ENCODE measurements at regions of chr6 and their contacts with region 1.

Region 1: DNA sequence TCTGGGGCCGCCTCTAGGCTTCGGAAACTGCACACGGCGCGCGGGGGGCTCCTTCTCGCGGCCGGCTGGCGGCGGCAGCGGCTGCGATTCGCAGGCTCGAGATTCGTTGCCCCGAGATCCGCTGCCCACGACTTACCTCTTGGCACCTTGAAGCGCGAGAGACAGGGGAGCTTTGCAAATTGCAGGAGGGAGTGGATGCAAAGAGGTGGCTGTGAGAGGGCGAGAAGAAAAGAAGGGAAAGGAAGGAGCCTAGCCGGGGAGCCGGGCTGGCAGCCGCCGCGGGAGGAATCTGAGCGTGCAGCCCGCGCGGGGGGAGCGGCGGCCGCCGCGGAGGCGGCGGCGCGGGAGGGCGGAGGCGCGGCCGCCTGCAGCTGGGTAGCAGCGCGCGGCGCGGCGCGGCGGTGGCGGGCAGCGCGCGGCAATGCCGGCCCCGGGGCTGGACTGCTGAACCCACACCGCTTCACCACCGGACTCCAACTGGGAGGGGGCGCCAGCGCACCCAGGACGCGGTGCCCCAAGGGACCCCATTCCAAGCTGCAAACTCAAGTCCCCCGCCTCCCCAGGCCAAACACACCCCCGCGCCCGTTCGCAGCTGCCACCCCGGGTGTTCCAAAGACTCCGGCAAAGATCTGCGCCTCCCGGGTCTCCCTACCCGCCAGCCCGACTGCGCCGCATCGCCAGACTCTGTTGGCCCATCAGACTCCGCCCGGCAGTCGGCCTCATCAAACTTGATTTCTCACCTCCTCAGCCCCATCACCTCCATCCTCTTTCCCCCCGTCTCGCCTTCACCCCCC is 44.2 kb upstream of the SUPT3H start:
- DNase-seq: peak; percentile 37
- H3K4me3 Mint-ChIP-seq: peak overlapping the region; percentile 97
- H3K27ac Mint-ChIP-seq: peak overlapping the region; percentile 94
- H3K4me1 Mint-ChIP-seq: peaks cover 38% of the 10 kb centered on the region
- H3K27me3 Mint-ChIP-seq: peaks cover 26% of the 10 kb centered on the region

Region 2: DNA sequence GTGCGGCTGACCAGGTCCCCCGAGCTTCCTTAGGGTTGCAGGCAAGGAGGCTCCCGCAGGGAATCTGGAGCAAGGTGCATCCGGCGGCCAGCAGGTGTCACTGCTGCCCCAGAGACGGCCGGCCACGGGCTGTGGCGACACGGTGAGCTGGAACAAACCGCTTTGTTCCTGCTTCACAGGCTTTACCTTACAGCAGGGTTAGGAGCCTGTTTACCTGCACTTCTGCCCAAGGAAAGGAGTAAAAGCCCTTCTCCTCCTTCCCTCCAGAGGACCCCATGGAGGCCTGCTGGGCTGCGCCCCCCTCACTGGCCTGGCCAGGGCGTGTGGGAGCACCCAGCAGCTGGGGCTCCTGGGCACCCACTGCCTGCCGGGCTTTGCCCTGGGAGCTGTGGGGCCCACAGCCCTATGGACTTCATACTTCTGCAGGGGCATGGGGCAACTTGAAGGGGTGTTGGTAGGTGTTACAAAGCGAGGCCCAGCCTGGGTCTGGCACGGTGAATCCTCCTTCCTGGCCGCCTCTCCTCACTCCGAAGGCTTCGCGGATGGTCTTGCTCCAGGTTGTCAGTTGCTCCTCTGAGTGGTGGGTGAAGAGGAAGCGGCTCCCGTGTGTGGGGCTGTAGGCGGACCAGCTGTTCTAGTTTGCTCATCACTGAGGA is 946.0 kb before region 1 on chr6:
- intact Hi-C with region 1: loop called (anchors 5 kb)
- DNase-seq: peak; percentile 61
- H3K4me3 Mint-ChIP-seq: no peak overlapping the region
- H3K27ac Mint-ChIP-seq: no peak overlapping the region
- H3K4me1 Mint-ChIP-seq: no peaks in the 10 kb centered on the region
- H3K27me3 Mint-ChIP-seq: peaks cover 13% of the 10 kb centered on the region

Region 3: GRCh38 chr6:44655412-44656342 is 766.2 kb before region 1 on chr6:
- intact Hi-C with region 1: loop called (anchors 1 kb)
- DNase-seq: peak; percentile 47
- H3K4me3 Mint-ChIP-seq: no peak overlapping the region
- H3K27ac Mint-ChIP-seq: peak overlapping the region; percentile 8
- H3K4me1 Mint-ChIP-seq: peaks cover 8% of the 10 kb centered on the region
- H3K27me3 Mint-ChIP-seq: peaks cover 4% of the 10 kb centered on the region

Region 4: GRCh38 chr6:45156075-45156474 is 265.8 kb before region 1 on chr6:
- intact Hi-C with region 1: loop called (anchors 2 kb)
- DNase-seq: peak; percentile 47
- H3K4me3 Mint-ChIP-seq: no peak overlapping the region
- H3K27ac Mint-ChIP-seq: peak overlapping the region; percentile 53
- H3K4me1 Mint-ChIP-seq: peaks cover 56% of the 10 kb centered on the region
- H3K27me3 Mint-ChIP-seq: no peaks in the 10 kb centered on the region

Region 5: GRCh38 chr6:45436544-45437438 is 14.9 kb after region 1 on chr6:
- intact Hi-C with region 1: loop called (anchors 1 kb)
- DNase-seq: no peak
- H3K4me3 Mint-ChIP-seq: peak overlapping the region; percentile 70
- H3K27ac Mint-ChIP-seq: peak overlapping the region; percentile 86
- H3K4me1 Mint-ChIP-seq: peaks cover 59% of the 10 kb centered on the region
- H3K27me3 Mint-ChIP-seq: no peaks in the 10 kb centered on the region

Region 6: DNA sequence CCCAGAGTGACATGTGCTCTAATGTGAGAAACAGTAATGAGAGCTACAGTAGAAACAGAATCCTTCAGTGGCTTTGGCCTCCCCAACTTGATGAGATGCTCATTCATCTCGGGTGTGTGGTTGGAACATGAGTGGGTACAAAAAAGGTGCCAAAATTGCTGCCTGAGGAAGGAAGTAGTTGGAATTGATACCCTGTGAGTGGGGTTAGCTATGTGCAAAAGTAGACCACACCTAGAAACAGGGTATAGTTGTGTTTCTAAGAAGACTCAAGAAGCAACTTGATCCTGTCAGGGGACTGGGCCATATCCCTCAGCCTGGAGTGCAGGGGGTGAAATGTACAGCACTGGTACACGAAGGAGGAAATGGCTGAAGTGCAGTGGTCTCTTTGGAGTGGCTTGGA is 162.2 kb after region 1 on chr6:
- intact Hi-C with region 1: loop called (anchors 1 kb)
- DNase-seq: no peak
- H3K4me3 Mint-ChIP-seq: peak overlapping the region; percentile 27
- H3K27ac Mint-ChIP-seq: peak overlapping the region; percentile 84
- H3K4me1 Mint-ChIP-seq: peaks cover 52% of the 10 kb centered on the region
- H3K27me3 Mint-ChIP-seq: no peaks in the 10 kb centered on the region

Region 7: DNA sequence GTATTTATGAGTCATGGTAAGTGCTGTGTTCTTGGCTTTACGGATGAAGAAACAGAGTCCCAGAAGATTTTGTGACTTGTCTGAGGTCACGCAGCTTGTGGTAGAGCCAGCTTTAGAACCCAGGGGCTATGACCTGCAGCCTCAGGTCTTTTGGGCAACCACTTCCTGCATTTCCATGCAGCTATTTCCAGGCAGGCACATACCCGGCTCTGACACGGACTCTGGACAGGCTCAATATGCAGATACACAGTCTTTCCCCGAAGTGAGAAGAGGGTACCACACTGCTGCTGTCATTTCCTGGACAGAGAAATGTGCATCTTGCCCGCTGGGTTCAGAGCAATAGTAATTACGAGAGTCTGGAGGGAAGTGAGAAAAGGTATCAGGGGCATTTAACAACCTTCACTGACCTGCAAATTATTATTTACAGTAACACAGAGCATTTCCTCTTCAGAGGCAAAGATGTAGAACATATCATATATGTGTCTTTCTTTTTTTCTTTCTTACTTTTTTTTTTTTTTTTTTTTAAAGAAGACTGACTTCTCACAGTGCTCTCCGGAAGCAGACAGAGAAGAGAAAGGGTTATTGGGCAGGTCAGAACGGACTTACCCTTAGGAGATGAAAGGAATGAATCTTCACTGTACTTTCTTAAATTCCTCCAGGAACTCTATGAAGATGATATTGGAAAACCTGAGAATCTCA is 408.7 kb after region 1 on chr6:
- intact Hi-C with region 1: loop called (anchors 5 kb)
- DNase-seq: peak; percentile 44
- H3K4me3 Mint-ChIP-seq: peak overlapping the region; percentile 70
- H3K27ac Mint-ChIP-seq: peak overlapping the region; percentile 85
- H3K4me1 Mint-ChIP-seq: peaks cover 47% of the 10 kb centered on the region
- H3K27me3 Mint-ChIP-seq: no peaks in the 10 kb centered on the region